AG04449 (cell line): ENCODE measurements at regions of chr10 and their contacts with region 1.

Region 1: GRCh38 chr10:124741281-124741921 is 2.8 kb downstream of the FAM53B start:
- DNase-seq: no peak
- H3K4me3 ChIP-seq: no peak overlapping the region
- CTCF ChIP-seq: peak; percentile 75

Region 2: GRCh38 chr10:124522933-124523871 is 218.2 kb before region 1 on chr10:
- CTCF ChIA-PET with region 1: interaction called, 141 read pairs
- POLR2A ChIA-PET with region 1: no interaction called
- DNase-seq: no peak
- H3K4me3 ChIP-seq: no peak overlapping the region
- CTCF ChIP-seq: no peak

Region 3: DNA sequence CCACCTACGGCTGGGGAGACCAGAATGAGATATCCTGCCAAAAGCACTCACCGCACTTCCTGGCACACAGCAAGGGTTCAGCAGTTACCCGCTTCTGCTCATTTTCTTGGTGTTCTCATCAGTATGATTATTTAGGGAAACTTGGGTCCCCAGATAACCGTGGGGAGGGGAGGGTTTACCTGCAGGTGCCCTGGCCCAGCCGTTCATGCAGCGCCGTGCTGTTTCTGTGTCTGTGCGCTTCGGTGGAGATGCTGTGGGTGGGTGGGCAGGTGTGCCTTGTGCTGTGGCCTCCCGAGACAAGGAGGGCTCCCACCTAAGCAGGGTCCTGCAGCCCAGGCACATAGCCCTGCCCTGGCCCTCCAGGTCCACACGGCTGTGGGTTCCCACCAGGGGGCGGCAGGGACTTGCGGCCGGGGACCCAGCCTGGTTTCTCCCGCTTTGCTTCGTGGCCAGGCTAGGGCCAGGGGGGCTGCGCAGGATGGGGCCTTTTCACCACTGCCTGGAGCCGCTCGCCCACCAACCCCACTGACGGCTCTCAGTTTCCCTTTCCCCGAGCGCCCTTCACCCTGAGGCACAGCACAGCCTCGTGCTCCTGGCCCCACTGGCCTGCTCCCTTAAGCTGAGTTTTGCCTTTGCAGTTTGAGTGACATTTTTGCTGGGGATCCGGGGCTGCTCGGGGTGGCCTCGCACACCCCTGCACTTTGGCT is 201.3 kb before region 1 on chr10:
- CTCF ChIA-PET with region 1: interaction called, 133 read pairs
- POLR2A ChIA-PET with region 1: no interaction called
- DNase-seq: no peak
- H3K4me3 ChIP-seq: no peak overlapping the region
- CTCF ChIP-seq: peak; percentile 84

Region 4: GRCh38 chr10:124632064-124632531 is 109.3 kb before region 1 on chr10:
- CTCF ChIA-PET with region 1: interaction called, 18 read pairs
- POLR2A ChIA-PET with region 1: no interaction called
- DNase-seq: no peak
- H3K4me3 ChIP-seq: no peak overlapping the region
- CTCF ChIP-seq: peak; percentile 19

Region 5: GRCh38 chr10:124654686-124655085 is 86.7 kb before region 1 on chr10:
- CTCF ChIA-PET with region 1: no interaction called
- POLR2A ChIA-PET with region 1: no interaction called
- DNase-seq: no peak
- H3K4me3 ChIP-seq: no peak overlapping the region
- CTCF ChIP-seq: no peak

Region 6: DNA sequence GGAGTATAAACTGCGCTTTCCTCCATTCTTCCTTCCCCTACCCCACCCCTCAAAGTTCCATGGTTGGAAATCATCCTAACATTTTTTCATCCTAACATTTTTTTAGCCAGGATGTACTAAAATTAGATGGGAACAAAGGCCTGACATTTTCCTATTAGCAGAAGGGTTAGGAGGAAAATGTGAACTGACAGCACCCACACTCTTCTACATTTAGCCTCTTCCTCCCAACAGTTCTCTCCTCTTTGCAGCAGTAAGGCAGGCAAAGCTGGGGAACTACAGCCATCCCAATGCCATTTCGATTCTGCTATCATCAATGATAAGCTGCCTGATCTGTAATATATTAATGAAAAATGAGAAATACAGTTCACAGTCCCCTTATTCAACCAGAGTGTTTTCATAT is 14.2 kb after region 1 on chr10:
- CTCF ChIA-PET with region 1: interaction called, 18 read pairs
- POLR2A ChIA-PET with region 1: no interaction called
- DNase-seq: no peak
- H3K4me3 ChIP-seq: no peak overlapping the region
- CTCF ChIP-seq: no peak